Activated CD4-positive, alpha-beta T cell treated with anti-CD3 and anti-CD28 coated beads, Interleukin-2, amount 10 ng/mL, durations not matched to agents 24 days and 14 days (primary cell): ENCODE measurements at regions of chr5 and their contacts with region 1.

Region 1: GRCh38 chr5:37709020-37709419 is 130.8 kb downstream of the GDNF start:
- DNase-seq: no peak
- H3K4me3 Mint-ChIP-seq: no peak overlapping the region
- H3K27ac Mint-ChIP-seq: no peak overlapping the region
- H3K4me1 Mint-ChIP-seq: peaks cover 7% of the 10 kb centered on the region
- H3K27me3 Mint-ChIP-seq: no peaks in the 10 kb centered on the region

Region 2: DNA sequence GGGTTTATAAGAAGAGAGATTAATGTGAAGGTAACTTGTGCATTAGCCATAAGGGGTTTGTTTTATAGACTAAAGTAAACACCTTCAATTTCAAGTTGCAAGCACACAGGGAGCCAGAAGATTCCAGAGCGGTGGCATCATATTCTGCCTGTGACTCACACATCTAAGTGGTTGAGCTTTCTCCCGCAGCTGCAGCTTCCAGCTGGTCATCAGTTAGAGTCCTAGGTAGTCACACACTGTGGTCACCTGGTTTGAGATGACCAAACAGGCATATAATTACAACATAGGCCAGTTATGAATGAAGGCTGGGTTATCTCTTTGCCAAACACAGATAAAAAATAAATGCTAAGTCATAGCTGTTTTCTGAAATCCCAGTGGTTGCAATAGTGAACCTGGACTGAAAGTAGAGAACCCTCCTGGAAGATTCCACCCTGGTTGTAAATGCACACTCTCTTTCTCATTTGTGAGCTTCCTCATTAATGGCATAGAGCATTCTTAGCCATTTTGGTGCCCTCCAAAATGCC is 40.4 kb before region 1 on chr5:
- intact Hi-C with region 1: loop called (anchors 5 kb)
- DNase-seq: no peak
- H3K4me3 Mint-ChIP-seq: no peak overlapping the region
- H3K27ac Mint-ChIP-seq: no peak overlapping the region
- H3K4me1 Mint-ChIP-seq: peaks cover 12% of the 10 kb centered on the region
- H3K27me3 Mint-ChIP-seq: no peaks in the 10 kb centered on the region

Region 3: DNA sequence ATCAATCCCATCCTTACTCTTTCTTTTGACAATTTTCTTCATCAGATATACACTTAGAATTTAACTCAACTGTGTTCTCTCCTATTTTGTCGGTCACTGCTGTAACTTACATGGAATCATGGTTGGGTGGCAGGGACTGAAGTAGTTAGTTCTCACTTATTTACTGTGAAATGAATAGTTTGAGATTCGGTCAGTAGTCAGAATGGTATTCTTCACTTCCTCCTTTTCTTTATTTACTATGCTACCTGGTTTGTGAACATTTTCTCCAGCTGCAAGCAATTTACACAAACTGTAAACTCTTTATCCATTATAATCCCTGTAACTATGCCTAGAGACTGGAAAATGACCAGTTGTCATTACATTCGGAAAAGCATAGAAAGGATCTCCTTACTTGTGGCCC is 172.3 kb after region 1 on chr5:
- intact Hi-C with region 1: no loop called
- DNase-seq: no peak
- H3K4me3 Mint-ChIP-seq: no peak overlapping the region
- H3K27ac Mint-ChIP-seq: no peak overlapping the region
- H3K4me1 Mint-ChIP-seq: no peaks in the 10 kb centered on the region
- H3K27me3 Mint-ChIP-seq: no peaks in the 10 kb centered on the region